ENCODE measurements at regions of chr9 and their contacts with region 1.

Region 1: GRCh38 chr9:84652577-84653061 is 16.9 kb upstream of the NTRK2 start:
- DNase-seq: no peak
- H3K4me3 ChIP-seq: peak overlapping the region in 13 of 59 donors; percentile 2 to 42 (median 21)
- H3K27ac ChIP-seq: no peak overlapping the region
- H3K27me3 ChIP-seq: no peaks in the 10 kb centered on the region
- CTCF ChIP-seq: peak in 55 of 56 donors; percentile 12 to 73 (median 53)

Region 2: GRCh38 chr9:83630938-83631457 is 1021.6 kb before region 1 on chr9:
- intact Hi-C with region 1: no loop called
- DNase-seq: no peak
- H3K4me3 ChIP-seq: peak overlapping the region in 1 of 59 donors; percentile 17
- H3K27ac ChIP-seq: peak overlapping the region in 11 of 59 donors; percentile 7 to 47 (median 22)
- H3K27me3 ChIP-seq: no peaks in the 10 kb centered on the region
- CTCF ChIP-seq: no peak

Region 3: GRCh38 chr9:85114799-85115198 is 462.2 kb after region 1 on chr9:
- intact Hi-C with region 1: loop called in 1 of 2 experiments (anchors 10 kb)
- DNase-seq: no peak
- H3K4me3 ChIP-seq: no peak overlapping the region
- H3K27ac ChIP-seq: no peak overlapping the region
- H3K27me3 ChIP-seq: no peaks in the 10 kb centered on the region
- CTCF ChIP-seq: no peak

Measured in dorsolateral prefrontal cortex (tissue), 120 donors.